Gastrocnemius medialis (tissue), 4 donors: ENCODE measurements at regions of chr9 and their contacts with region 1.

Region 1: GRCh38 chr9:126985870-126986498 is 71.4 kb downstream of the RALGPS1 start:
- DNase-seq: peak; percentile 60 to 74
- ATAC-seq: peak; percentile 41 to 59
- H3K4me3 ChIP-seq: no peak overlapping the region
- H3K27ac ChIP-seq: peak overlapping the region; percentile 61 to 91 (median 68)
- H3K4me1 ChIP-seq: peaks cover 47 to 52% of the 10 kb centered on the region in 2 donors
- H3K27me3 ChIP-seq: no peaks in the 10 kb centered on the region
- CTCF ChIP-seq: no peak
- POLR2A ChIP-seq: no peak

Region 2: GRCh38 chr9:126084008-126084407 is 902.0 kb before region 1 on chr9:
- in situ Hi-C with region 1: no loop called
- intact Hi-C with region 1: no loop called
- DNase-seq: no peak
- ATAC-seq: no peak
- H3K4me3 ChIP-seq: no peak overlapping the region
- H3K27ac ChIP-seq: no peak overlapping the region
- H3K4me1 ChIP-seq: no peaks in the 10 kb centered on the region
- H3K27me3 ChIP-seq: peaks cover 0 to 3% (median 0%) of the 10 kb centered on the region in 3 donors
- CTCF ChIP-seq: no peak
- POLR2A ChIP-seq: no peak

Region 3: DNA sequence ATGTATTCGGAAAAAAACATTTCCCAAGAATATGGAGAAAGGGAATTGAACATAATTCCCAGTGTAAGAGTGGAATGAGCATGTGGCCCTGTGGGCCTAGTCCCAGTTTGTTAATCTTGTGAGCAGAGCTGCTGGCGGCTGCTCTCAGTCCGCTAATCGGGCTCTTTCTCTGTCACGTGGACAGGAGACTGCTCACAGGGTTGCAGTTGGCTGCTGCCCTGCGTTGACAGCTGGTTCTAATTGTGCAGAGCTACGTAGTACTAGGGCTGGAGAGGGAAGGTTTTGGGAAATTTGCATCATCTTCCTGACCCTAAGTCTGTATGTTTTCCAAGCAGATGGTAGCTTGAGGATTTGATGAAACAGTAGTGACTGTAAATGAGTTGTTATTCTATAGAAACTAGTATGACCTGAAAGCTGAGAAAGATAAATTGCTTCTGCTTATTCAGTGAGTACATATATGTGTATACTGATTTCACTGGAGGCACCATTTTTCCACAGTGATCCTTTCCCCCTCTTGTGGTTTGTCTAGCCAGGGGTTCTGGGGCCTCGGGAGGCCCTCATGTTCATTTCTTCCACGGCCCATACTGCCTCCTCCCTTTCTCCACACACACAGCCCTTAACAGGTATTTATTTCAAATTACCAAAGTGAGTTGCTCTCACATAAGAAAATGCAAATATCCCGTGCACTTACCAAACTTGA is 35.8 kb after region 1 on chr9:
- in situ Hi-C with region 1: no loop called
- intact Hi-C with region 1: loop called (anchors 2 kb)
- DNase-seq: peak; percentile 92 to 94
- ATAC-seq: peak; percentile 94 to 98
- H3K4me3 ChIP-seq: no peak overlapping the region
- H3K27ac ChIP-seq: peak overlapping the region; percentile 74 to 81 (median 79)
- H3K4me1 ChIP-seq: peaks cover 26 to 41% of the 10 kb centered on the region in 2 donors
- H3K27me3 ChIP-seq: no peaks in the 10 kb centered on the region
- CTCF ChIP-seq: no peak
- POLR2A ChIP-seq: no peak

Region 4: GRCh38 chr9:127035951-127036350 is 50.0 kb after region 1 on chr9:
- in situ Hi-C with region 1: no loop called
- intact Hi-C with region 1: no loop called
- DNase-seq: peak; percentile 23 to 61
- ATAC-seq: peak; percentile 62 to 73
- H3K4me3 ChIP-seq: no peak overlapping the region
- H3K27ac ChIP-seq: peak overlapping the region; percentile 45 to 68 (median 58)
- H3K4me1 ChIP-seq: peaks cover 19 to 32% of the 10 kb centered on the region in 2 donors
- H3K27me3 ChIP-seq: no peaks in the 10 kb centered on the region
- CTCF ChIP-seq: no peak
- POLR2A ChIP-seq: no peak

Region 5: DNA sequence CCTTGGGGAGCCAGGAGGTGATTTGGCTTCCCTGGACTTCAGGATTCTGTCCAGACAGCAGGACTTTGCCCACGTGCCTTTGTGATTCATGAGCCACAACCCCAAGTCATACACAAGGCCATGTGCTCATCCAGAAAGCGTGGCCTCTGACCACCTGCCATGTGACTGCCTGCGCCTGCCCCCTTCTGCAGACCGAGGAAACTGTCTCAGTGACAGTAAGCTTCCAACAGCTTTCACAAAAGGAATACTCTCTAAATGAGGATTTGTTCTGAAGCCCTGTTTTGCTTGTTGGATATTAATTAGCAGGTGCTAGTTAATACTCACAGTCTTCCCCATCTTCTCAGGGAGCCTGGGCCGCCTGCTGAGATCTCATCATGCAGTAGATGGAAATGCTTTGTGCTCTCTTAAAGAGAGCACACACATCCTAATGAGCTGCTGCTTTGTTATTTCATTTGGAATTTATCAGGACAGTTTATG is 173.4 kb after region 1 on chr9:
- in situ Hi-C with region 1: no loop called
- intact Hi-C with region 1: loop called (anchors 5 kb)
- DNase-seq: peak; percentile 88 to 92
- ATAC-seq: peak; percentile 93 to 97
- H3K4me3 ChIP-seq: no peak overlapping the region
- H3K27ac ChIP-seq: peak overlapping the region; percentile 62 to 77 (median 72)
- H3K4me1 ChIP-seq: peaks cover 34 to 49% of the 10 kb centered on the region in 2 donors
- H3K27me3 ChIP-seq: no peaks in the 10 kb centered on the region
- CTCF ChIP-seq: peak; percentile 25 to 50 (median 47)
- POLR2A ChIP-seq: peak; percentile 20 to 63

Region 6: GRCh38 chr9:127637322-127637847 is 651.4 kb after region 1 on chr9:
- in situ Hi-C with region 1: no loop called
- intact Hi-C with region 1: no loop called
- DNase-seq: no peak
- ATAC-seq: peak; percentile 65 to 73
- H3K4me3 ChIP-seq: peak overlapping the region in 1 of 4 donors; percentile 6
- H3K27ac ChIP-seq: peak overlapping the region in 3 of 4 donors; percentile 7 to 31 (median 9)
- H3K4me1 ChIP-seq: no peaks in the 10 kb centered on the region
- H3K27me3 ChIP-seq: no peaks in the 10 kb centered on the region
- CTCF ChIP-seq: no peak
- POLR2A ChIP-seq: no peak